Activated B cell treated with CpG ODN at 0.5 μM for 24 hours (primary cell): ENCODE measurements at regions of chr1 and their contacts with region 1.

Region 1: DNA sequence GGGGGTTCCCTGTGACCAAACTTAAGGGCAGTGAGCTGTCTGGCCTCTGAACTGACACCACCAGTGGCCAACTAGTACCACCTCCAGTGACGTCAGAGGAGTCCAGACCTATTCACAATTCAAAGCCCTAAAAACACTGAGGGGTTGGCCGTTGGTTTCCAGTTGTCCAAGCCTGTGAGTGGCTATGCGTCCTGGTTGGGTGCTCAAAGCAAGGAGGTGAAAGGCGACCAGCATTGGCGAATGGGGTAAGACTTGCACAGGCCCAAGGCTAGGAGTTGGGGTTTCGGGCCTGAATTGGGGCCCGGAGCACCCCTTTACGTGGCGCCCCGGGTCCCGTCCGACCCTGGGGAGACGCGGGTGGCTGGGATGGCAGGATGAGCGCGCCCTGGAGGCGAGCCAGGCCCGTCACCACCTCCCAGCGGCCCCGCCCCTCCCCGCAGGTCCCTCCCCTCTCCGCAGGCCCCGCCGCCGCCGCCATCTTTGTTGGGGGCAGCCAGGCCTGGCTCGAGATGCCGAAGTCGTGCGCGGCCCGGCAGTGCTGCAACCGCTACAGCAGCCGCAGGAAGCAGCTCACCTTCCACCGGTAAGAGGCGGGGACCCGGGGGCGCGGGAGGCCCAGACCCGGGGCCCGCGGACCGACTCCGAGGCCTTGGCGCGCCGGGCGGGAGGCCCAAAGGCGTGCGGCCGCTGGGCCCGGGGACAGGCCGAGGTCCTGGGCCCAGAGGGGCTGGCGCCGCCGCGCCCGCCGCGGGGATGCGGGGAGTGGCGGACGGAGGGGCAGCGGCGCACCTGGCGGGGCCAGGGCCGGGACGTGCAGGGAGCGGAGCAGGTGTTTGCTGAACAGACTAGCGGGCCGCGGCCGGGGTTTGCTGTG is at the start of gene THAP3:
- DNase-seq: peak; percentile 83
- ATAC-seq: peak; percentile 97
- H3K4me3 Mint-ChIP-seq: peak within 1 kb of the TSS; percentile 86
- H3K27ac Mint-ChIP-seq: peak within 1 kb of the TSS; percentile 71
- H3K4me1 Mint-ChIP-seq: peaks cover 32% of the 10 kb centered on the region
- H3K27me3 Mint-ChIP-seq: no peaks in the 10 kb centered on the region
- CTCF ChIP-seq: no peak
- total RNA-seq, gene THAP3: 16.2 and 21.3 TPM in 2 replicates

Region 2: GRCh38 chr1:6701437-6702153 is 76.6 kb after region 1 on chr1 and contains the start of gene DNAJC11:
- CTCF ChIA-PET with region 1: no interaction called
- POLR2A ChIA-PET with region 1: interaction called, 3 read pairs
- intact Hi-C with region 1: loop called (anchors 1 kb)
- DNase-seq: peak; percentile 99
- ATAC-seq: peak; percentile 95
- H3K4me3 Mint-ChIP-seq: peak within 1 kb of the TSS; percentile 92
- H3K27ac Mint-ChIP-seq: peak within 1 kb of the TSS; percentile 88
- H3K4me1 Mint-ChIP-seq: peaks cover 21% of the 10 kb centered on the region
- H3K27me3 Mint-ChIP-seq: no peaks in the 10 kb centered on the region
- CTCF ChIP-seq: peak; percentile 28
- total RNA-seq, gene DNAJC11: 57.0 and 65.6 TPM in 2 replicates